ENCODE measurements at regions of chr1 and their contacts with region 1.

Region 1: DNA sequence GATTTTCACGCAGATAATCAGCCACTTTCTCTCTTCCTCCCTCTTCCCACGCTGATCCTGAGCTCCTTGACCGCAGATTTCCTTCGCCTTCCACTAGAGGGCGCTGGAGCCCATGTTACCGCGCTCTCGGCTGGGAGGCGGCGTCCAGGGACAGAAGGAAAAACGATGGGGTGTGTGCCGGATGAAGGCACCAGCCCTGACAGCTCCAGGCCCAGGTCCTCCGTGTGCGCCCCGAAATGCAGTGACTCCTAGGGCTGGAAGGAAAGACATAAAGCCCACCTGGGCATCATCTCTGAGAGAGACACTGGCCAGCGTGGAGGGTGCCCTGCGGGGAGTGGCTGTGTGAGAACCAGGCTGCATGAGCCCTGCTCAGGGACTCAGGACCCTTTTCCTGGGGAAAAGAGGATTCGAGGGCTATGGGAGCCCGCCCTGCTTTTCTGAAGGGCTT is 44.9 kb upstream of the CYP2J2 start:
- DNase-seq: peak; percentile 82
- H3K4me3 Mint-ChIP-seq: peak overlapping the region; percentile 29
- H3K27ac Mint-ChIP-seq: no peak overlapping the region
- H3K4me1 Mint-ChIP-seq: no peaks in the 10 kb centered on the region
- H3K27me3 Mint-ChIP-seq: peaks cover 54% of the 10 kb centered on the region
- CTCF ChIP-seq: peak; percentile 88

Region 2: DNA sequence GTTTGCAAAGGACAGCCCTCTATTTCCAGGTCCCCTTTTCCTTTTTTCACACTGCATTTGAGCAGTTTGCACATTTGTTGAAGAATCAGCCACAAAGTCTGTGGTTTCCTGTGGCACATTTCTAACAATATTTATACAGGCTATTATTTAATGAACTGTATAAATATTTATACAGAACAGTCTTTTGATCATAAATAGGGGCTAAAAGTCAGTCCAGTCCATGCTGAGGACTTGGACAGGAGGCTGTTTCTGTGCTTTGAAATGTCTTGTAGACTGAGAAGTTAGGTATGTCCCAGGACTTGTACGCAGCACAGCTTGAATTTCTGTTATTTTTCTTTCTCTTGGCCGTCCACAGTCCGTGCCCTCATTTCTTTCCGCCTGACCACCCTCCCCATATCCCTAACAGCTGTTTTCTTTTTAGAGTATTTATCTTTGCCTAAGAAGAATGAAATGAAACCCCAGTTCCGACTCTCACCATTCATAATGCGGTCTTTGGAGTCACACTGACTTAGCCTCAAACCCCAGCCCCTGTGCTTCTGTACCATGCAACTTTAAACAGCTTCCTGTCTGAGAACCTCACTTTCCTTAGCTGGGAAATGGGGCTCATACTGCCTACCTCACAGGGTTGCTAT is 654.9 kb before region 1 on chr1:
- CTCF ChIA-PET with region 1: no interaction called
- intact Hi-C with region 1: no loop called
- DNase-seq: no peak
- H3K4me3 Mint-ChIP-seq: no peak overlapping the region
- H3K27ac Mint-ChIP-seq: no peak overlapping the region
- H3K4me1 Mint-ChIP-seq: no peaks in the 10 kb centered on the region
- H3K27me3 Mint-ChIP-seq: no peaks in the 10 kb centered on the region
- CTCF ChIP-seq: no peak

Region 3: DNA sequence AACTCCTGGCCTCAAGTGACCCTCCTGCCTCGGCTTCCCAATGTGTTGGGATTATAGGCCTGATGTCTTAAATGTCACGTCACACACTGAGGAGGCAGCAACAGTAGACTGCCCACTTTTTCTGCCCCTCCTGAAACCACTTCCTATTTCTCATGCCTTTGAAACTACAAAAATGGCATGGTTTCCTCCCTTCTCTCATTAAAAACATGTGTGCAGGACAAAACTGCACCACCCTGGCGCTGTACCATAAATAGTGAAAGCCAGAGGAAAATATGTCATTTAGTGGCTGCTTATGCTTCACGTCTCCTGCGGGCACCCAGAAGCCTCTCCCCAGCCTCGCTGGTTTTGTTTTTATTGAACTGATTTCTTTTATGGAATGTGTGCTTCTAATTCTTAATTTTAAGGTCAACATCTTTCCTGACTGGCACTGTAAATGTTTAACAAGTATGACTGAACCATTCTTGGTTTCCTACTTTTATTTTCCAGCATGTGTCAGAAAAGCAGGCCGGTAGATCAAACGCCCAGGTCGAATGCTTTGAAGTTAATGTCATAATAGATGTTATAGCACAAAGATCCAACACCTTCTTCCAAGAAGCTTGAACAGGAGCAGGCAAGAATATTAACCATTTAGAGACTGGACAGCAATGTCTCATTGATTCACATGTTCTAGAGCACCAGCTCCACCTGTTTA is 161.6 kb after region 1 on chr1:
- CTCF ChIA-PET with region 1: interaction called, 4 read pairs
- intact Hi-C with region 1: loop called (anchors 5 kb)
- DNase-seq: no peak
- H3K4me3 Mint-ChIP-seq: no peak overlapping the region
- H3K27ac Mint-ChIP-seq: no peak overlapping the region
- H3K4me1 Mint-ChIP-seq: peaks cover 14% of the 10 kb centered on the region
- H3K27me3 Mint-ChIP-seq: no peaks in the 10 kb centered on the region
- CTCF ChIP-seq: no peak

Region 4: GRCh38 chr1:60281360-60281932 is 310.0 kb after region 1 on chr1:
- CTCF ChIA-PET with region 1: no interaction called
- intact Hi-C with region 1: loop called (anchors 5 kb)
- DNase-seq: peak; percentile 66
- H3K4me3 Mint-ChIP-seq: no peak overlapping the region
- H3K27ac Mint-ChIP-seq: peak overlapping the region; percentile 30
- H3K4me1 Mint-ChIP-seq: peaks cover 22% of the 10 kb centered on the region
- H3K27me3 Mint-ChIP-seq: no peaks in the 10 kb centered on the region
- CTCF ChIP-seq: peak; percentile 79

Region 5: DNA sequence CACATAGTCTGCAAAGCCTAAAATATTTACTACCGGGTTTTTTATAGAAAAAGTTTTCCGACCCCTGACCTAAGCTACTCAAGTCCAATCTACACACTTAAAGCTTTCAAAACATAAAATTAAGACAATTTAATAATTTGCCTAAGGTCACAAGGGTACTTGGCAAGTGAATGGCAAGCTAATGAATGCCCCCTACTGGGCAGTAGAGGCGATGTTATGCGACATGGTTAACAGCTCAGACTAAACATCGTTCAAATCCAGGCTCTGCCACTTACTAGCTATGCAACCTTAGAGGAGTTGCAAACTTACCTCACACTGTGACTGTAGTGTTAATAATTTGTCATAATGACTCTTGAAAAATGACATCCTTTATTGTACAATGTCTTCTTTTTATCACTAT is 793.7 kb after region 1 on chr1:
- CTCF ChIA-PET with region 1: interaction called, 3 read pairs
- intact Hi-C with region 1: loop called (anchors 10 kb)
- DNase-seq: peak; percentile 36
- H3K4me3 Mint-ChIP-seq: no peak overlapping the region
- H3K27ac Mint-ChIP-seq: no peak overlapping the region
- H3K4me1 Mint-ChIP-seq: no peaks in the 10 kb centered on the region
- H3K27me3 Mint-ChIP-seq: no peaks in the 10 kb centered on the region
- CTCF ChIP-seq: peak; percentile 55

Region 6: GRCh38 chr1:61049850-61050540 is 1078.5 kb after region 1 on chr1:
- CTCF ChIA-PET with region 1: no interaction called
- intact Hi-C with region 1: loop called (anchors 10 kb)
- DNase-seq: peak; percentile 93
- H3K4me3 Mint-ChIP-seq: peak overlapping the region; percentile 71
- H3K27ac Mint-ChIP-seq: peak overlapping the region; percentile 33
- H3K4me1 Mint-ChIP-seq: peaks cover 19% of the 10 kb centered on the region
- H3K27me3 Mint-ChIP-seq: peaks cover 27% of the 10 kb centered on the region
- CTCF ChIP-seq: peak; percentile 97

Measured in Calu3 (cell line).